Heart right ventricle (tissue), 16 donors: ENCODE measurements at regions of chr1 and their contacts with region 1.

Region 1: GRCh38 chr1:173986951-173987350 is 35.2 kb downstream of the RC3H1 start:
- DNase-seq: no peak
- ATAC-seq: no peak
- H3K4me3 ChIP-seq: no peak overlapping the region
- H3K27ac ChIP-seq: no peak overlapping the region
- H3K4me1 ChIP-seq: no peaks in the 10 kb centered on the region
- H3K27me3 ChIP-seq: no peaks in the 10 kb centered on the region
- CTCF ChIP-seq: no peak

Region 2: GRCh38 chr1:173946380-173946921 is 40.5 kb before region 1 on chr1:
- intact Hi-C with region 1: loop called in 2 of 10 experiments (anchors 2 to 5 kb)
- DNase-seq: no peak
- ATAC-seq: no peak
- H3K4me3 ChIP-seq: no peak overlapping the region
- H3K27ac ChIP-seq: no peak overlapping the region
- H3K4me1 ChIP-seq: no peaks in the 10 kb centered on the region
- H3K27me3 ChIP-seq: no peaks in the 10 kb centered on the region
- CTCF ChIP-seq: no peak

Region 3: GRCh38 chr1:174068000-174068399 is 81.0 kb after region 1 on chr1:
- intact Hi-C with region 1: loop called in 3 of 10 experiments (anchors 10 kb)
- DNase-seq: no peak
- ATAC-seq: no peak
- H3K4me3 ChIP-seq: no peak overlapping the region
- H3K27ac ChIP-seq: no peak overlapping the region
- H3K4me1 ChIP-seq: no peaks in the 10 kb centered on the region
- H3K27me3 ChIP-seq: no peaks in the 10 kb centered on the region
- CTCF ChIP-seq: no peak

Region 4: GRCh38 chr1:174074757-174075156 is 87.8 kb after region 1 on chr1:
- intact Hi-C with region 1: loop called in 3 of 10 experiments (anchors 10 kb)
- DNase-seq: no peak
- ATAC-seq: no peak
- H3K4me3 ChIP-seq: no peak overlapping the region
- H3K27ac ChIP-seq: no peak overlapping the region
- H3K4me1 ChIP-seq: peaks cover 0 to 5% (median 0%) of the 10 kb centered on the region in 9 donors
- H3K27me3 ChIP-seq: no peaks in the 10 kb centered on the region
- CTCF ChIP-seq: peak in 8 of 9 donors; percentile 19 to 65 (median 53)

Region 5: GRCh38 chr1:174519844-174520243 is 532.9 kb after region 1 on chr1:
- intact Hi-C with region 1: no loop called
- DNase-seq: peak in 1 of 2 donors; percentile 22
- ATAC-seq: peak; percentile 87 to 98 (median 91)
- H3K4me3 ChIP-seq: no peak overlapping the region
- H3K27ac ChIP-seq: peak overlapping the region in 8 of 10 donors; percentile 2 to 74 (median 58)
- H3K4me1 ChIP-seq: peaks cover 0 to 29% (median 3%) of the 10 kb centered on the region in 9 donors
- H3K27me3 ChIP-seq: no peaks in the 10 kb centered on the region
- CTCF ChIP-seq: no peak